Activated CD4-positive, alpha-beta T cell treated with anti-CD3 and anti-CD28 coated beads, Interleukin-2, amount 10 ng/mL, durations not matched to agents 24 days and 14 days (primary cell): ENCODE measurements at regions of chr16 and their contacts with region 1.

Region 1: DNA sequence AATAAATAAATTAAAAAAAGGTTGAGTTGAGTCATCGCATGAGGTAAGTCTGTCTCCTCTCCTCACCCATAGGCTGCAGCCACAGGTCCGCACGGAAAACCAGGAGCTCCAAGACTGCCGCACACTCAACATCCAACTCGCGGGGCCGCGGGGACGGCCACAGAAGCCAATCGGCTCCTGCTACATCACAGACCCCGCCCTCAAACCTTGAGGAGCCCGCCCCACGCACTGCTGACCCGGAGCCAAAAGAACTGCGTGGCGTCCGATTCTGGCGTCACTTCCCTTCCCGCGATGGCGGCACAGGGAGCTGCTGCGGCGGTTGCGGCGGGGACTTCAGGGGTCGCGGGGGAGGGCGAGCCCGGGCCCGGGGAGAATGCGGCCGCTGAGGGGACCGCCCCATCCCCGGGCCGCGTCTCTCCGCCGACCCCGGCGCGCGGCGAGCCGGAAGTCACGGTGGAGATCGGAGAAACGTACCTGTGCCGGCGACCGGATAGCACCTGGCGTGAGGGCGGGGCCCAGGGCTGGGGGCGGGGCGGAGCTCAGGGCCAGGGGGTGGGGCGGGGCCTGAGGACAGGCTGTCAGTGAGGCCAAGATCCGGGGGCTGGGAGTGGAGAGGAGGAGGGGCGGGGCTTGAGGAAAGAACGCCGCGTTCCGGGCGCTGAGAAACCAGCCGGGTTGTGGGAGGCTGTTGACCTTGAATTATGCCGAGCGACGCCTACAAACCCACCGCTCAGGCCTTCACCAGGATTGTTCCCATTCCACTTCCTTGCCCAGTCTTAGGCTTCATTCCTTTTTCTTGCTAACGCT is at the start of gene KAT8:
- DNase-seq: peak; percentile 99
- H3K4me3 Mint-ChIP-seq: peak within 1 kb of the TSS; percentile 88
- H3K27ac Mint-ChIP-seq: peak within 1 kb of the TSS; percentile 89
- H3K4me1 Mint-ChIP-seq: peaks cover 11% of the 10 kb centered on the region
- H3K27me3 Mint-ChIP-seq: no peaks in the 10 kb centered on the region
- total RNA-seq, gene KAT8: 56.9 and 63.3 TPM in 2 replicates

Region 2: GRCh38 chr16:30957456-30958174 is 160.0 kb before region 1 on chr16 and contains the start of gene SETD1A:
- intact Hi-C with region 1: loop called (anchors 5 kb)
- DNase-seq: peak; percentile 99
- H3K4me3 Mint-ChIP-seq: peak within 1 kb of the TSS; percentile 94
- H3K27ac Mint-ChIP-seq: peak within 1 kb of the TSS; percentile 99
- H3K4me1 Mint-ChIP-seq: peaks cover 32% of the 10 kb centered on the region
- H3K27me3 Mint-ChIP-seq: no peaks in the 10 kb centered on the region
- total RNA-seq, gene SETD1A: 30.7 and 31.5 TPM in 2 replicates